Aorta (tissue), 5 donors: ENCODE measurements at regions of chr7 and their contacts with region 1.

Region 1: GRCh38 chr7:141014524-141015395 is at the start of gene MRPS33:
- DNase-seq: peak; percentile 97
- ATAC-seq: peak; percentile 100
- H3K4me3 ChIP-seq: peak within 1 kb of the TSS; percentile 63 to 89
- H3K27ac ChIP-seq: peak within 1 kb of the TSS in 1 of 2 donors; percentile 60
- H3K4me1 ChIP-seq: peaks cover 0 to 2% of the 10 kb centered on the region in 2 donors
- H3K27me3 ChIP-seq: no peaks in the 10 kb centered on the region
- total RNA-seq, gene MRPS33: 21.0 to 23.4 TPM

Region 2: DNA sequence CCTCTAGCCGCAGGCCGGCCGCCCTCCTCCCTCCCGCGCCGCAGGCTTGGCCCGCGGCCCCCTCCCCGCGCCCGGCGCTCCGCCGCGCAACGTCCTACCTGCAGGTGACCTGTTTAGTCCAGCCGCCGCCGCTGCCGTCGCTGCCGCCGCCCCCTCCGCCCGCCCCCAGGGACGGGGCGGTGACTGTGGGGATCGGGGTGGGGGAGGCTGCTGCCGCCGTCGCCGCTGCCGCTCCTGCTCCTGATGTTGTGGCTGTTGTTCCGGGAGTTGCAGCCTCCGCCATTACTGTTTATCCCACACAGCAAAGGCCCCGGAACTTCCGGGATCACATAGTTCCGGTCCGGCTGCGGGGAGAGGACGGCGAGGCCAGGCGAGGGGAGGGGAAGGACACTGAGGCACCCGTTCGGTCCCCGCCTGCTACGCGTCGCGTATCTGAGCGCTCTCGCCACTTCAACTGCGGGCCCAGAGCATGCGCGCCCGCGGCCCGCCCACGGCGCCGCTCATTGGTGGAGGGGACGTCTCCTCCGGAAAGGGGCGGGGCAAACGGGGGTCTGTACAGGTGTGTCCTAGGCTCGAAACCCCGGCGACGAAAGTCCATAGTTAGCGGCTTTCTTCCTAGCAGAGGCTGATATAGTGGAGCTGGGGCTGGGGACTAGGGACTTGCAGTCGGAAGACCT is 535.6 kb before region 1 on chr7 and contains the start of gene MKRN1:
- intact Hi-C with region 1: loop called in 1 of 2 experiments (anchors 10 kb)
- DNase-seq: peak; percentile 96 to 97
- ATAC-seq: peak; percentile 95
- H3K4me3 ChIP-seq: peak within 1 kb of the TSS; percentile 90 to 93
- H3K27ac ChIP-seq: peak within 1 kb of the TSS in 1 of 2 donors; percentile 28
- H3K4me1 ChIP-seq: no peaks in the 10 kb centered on the region
- H3K27me3 ChIP-seq: no peaks in the 10 kb centered on the region
- total RNA-seq, gene MKRN1: 68.5 to 69.2 TPM

Region 3: DNA sequence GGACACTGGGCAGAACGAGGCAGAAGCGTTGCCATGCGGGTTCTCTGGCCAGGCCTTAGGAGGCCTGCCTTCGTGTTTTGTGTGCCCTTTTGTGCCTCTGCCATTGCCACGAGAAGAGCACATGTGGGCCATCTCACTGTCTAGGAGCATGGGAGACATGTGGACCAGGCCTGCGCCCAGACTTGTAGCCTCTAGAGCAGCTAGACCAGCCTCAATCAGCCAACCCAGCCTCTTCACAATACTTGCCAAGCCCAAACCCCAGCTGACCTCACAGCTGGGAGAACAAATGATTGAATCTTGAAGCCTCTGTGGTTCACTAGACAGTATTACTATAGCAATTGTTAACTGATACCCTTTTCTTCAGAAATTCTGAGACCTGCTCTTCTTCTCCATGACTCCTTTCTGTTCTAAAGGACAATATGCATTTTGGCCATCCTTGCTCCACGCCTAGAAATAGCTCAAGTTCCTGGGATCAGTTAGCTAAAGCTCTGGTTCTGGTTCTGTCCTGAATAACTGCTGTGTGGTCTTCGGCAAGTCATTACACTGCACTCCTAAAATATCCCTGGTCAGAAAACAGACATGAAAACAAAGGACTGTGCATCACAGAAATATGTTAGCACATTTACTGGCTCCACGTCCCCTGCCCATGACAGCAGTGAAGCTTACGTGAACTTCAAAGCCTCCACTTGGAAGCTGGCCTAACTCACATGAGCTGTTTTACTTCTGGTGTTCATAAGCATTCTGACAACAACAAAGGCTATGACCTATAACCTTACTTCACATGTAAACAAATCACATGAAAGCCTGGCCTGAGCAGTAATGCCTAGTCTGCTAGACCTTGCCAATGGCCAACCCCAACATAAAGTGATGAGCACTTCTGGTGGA is 463.2 kb before region 1 on chr7:
- intact Hi-C with region 1: no loop called
- DNase-seq: no peak
- ATAC-seq: no peak
- H3K4me3 ChIP-seq: no peak overlapping the region
- H3K27ac ChIP-seq: no peak overlapping the region
- H3K4me1 ChIP-seq: no peaks in the 10 kb centered on the region
- H3K27me3 ChIP-seq: no peaks in the 10 kb centered on the region

Region 4: GRCh38 chr7:140673063-140673773 is 341.5 kb before region 1 on chr7:
- intact Hi-C with region 1: loop called in 1 of 2 experiments (anchors 5 kb)
- DNase-seq: peak; percentile 65 to 82
- ATAC-seq: peak; percentile 44
- H3K4me3 ChIP-seq: peak overlapping the region; percentile 72 to 95
- H3K27ac ChIP-seq: peak overlapping the region in 1 of 2 donors; percentile 53
- H3K4me1 ChIP-seq: no peaks in the 10 kb centered on the region
- H3K27me3 ChIP-seq: no peaks in the 10 kb centered on the region

Region 5: GRCh38 chr7:140810830-140811556 is 203.8 kb before region 1 on chr7:
- intact Hi-C with region 1: loop called (anchors 2 kb)
- DNase-seq: peak in 1 of 2 donors; percentile 53
- ATAC-seq: peak; percentile 85
- H3K4me3 ChIP-seq: no peak overlapping the region
- H3K27ac ChIP-seq: no peak overlapping the region
- H3K4me1 ChIP-seq: no peaks in the 10 kb centered on the region
- H3K27me3 ChIP-seq: no peaks in the 10 kb centered on the region

Region 6: GRCh38 chr7:140924019-140924820 is 90.5 kb before region 1 on chr7:
- intact Hi-C with region 1: loop called in 1 of 2 experiments (anchors 10 kb)
- DNase-seq: peak; percentile 85 to 93
- ATAC-seq: peak; percentile 88
- H3K4me3 ChIP-seq: peak overlapping the region; percentile 93 to 99
- H3K27ac ChIP-seq: peak overlapping the region; percentile 90 to 99
- H3K4me1 ChIP-seq: no peaks in the 10 kb centered on the region
- H3K27me3 ChIP-seq: no peaks in the 10 kb centered on the region

Region 7: GRCh38 chr7:141737834-141738591 is 723.3 kb after region 1 on chr7 and contains the start of gene SSBP1:
- intact Hi-C with region 1: loop called in 1 of 2 experiments (anchors 10 kb)
- DNase-seq: peak; percentile 93 to 94
- ATAC-seq: peak; percentile 97
- H3K4me3 ChIP-seq: peak within 1 kb of the TSS; percentile 51 to 74
- H3K27ac ChIP-seq: peak within 1 kb of the TSS; percentile 19 to 43
- H3K4me1 ChIP-seq: peaks cover 0 to 2% of the 10 kb centered on the region in 2 donors
- H3K27me3 ChIP-seq: no peaks in the 10 kb centered on the region
- total RNA-seq, gene SSBP1: 72.1 to 77.0 TPM